Ascending aorta (tissue), 2 donors: ENCODE measurements at regions of chr1 and their contacts with region 1.

Region 1: DNA sequence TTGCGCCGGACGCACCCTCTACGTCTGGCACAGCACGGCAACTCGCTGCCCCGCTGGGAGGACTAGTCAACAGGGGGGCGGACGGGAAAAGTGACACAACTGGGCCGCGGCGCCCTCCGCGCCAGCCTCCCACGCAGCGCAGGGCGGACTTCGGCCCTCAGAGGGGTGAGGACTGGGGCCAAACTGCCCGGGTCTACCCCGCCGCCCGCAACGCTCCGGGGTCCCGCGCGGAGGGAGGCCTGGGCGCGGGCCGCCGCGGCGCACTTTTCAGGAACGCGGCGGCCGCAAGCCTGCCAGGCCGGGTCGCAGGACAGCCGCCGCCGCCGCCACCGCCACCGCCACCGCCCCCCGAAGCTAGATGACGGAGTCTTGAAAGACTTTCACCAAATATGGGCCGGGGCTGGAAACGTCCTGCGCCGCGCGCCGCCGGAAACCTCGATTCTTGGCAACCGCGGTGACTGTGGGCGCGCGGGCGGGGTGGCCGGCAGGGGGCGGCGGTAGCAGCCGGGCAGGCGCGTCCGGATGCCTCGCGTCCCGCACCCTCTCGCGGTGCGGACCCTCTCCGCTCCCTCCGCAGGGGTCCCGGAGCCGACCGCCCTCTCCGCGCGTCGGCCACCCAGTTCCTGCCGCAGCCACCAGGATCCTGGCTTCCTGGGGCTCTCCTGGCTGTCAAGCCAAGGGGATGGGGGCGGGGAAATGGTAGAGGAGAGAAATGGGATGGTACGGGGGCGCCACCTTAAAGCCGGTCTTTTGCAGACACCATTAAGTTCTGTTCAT is 3.7 kb upstream of the CCN1 start:
- DNase-seq: peak; percentile 57 to 96
- H3K4me3 ChIP-seq: peak overlapping the region; percentile 62 to 88
- H3K27ac ChIP-seq: peak overlapping the region; percentile 92 to 96
- H3K4me1 ChIP-seq: peaks cover 5 to 23% of the 10 kb centered on the region in 2 donors
- H3K27me3 ChIP-seq: no peaks in the 10 kb centered on the region
- CTCF ChIP-seq: peak; percentile 59 to 93 (median 67)

Region 2: GRCh38 chr1:85628791-85629531 is 52.1 kb after region 1 on chr1:
- intact Hi-C with region 1: loop called (anchors 5 kb)
- DNase-seq: peak in 1 of 2 donors; percentile 79
- H3K4me3 ChIP-seq: peak overlapping the region in 1 of 2 donors; percentile 1
- H3K27ac ChIP-seq: peak overlapping the region; percentile 82 to 91
- H3K4me1 ChIP-seq: peaks cover 2 to 21% of the 10 kb centered on the region in 2 donors
- H3K27me3 ChIP-seq: no peaks in the 10 kb centered on the region
- CTCF ChIP-seq: no peak

Region 3: GRCh38 chr1:85865213-85865612 is 288.4 kb after region 1 on chr1:
- intact Hi-C with region 1: no loop called
- DNase-seq: no peak
- H3K4me3 ChIP-seq: no peak overlapping the region
- H3K27ac ChIP-seq: peak overlapping the region in 1 of 2 donors; percentile 1
- H3K4me1 ChIP-seq: no peaks in the 10 kb centered on the region
- H3K27me3 ChIP-seq: no peaks in the 10 kb centered on the region
- CTCF ChIP-seq: no peak